ENCODE measurements at regions of chr5 and their contacts with region 1.

Region 1: GRCh38 chr5:150217873-150218692 is 28.2 kb downstream of the SLC6A7 start:
- DNase-seq: peak; percentile 91
- ATAC-seq: peak; percentile 96
- H3K4me3 Mint-ChIP-seq: no peak overlapping the region
- H3K27ac Mint-ChIP-seq: no peak overlapping the region
- H3K4me1 Mint-ChIP-seq: peaks cover 10% of the 10 kb centered on the region
- H3K27me3 Mint-ChIP-seq: peaks cover 25% of the 10 kb centered on the region

Region 2: DNA sequence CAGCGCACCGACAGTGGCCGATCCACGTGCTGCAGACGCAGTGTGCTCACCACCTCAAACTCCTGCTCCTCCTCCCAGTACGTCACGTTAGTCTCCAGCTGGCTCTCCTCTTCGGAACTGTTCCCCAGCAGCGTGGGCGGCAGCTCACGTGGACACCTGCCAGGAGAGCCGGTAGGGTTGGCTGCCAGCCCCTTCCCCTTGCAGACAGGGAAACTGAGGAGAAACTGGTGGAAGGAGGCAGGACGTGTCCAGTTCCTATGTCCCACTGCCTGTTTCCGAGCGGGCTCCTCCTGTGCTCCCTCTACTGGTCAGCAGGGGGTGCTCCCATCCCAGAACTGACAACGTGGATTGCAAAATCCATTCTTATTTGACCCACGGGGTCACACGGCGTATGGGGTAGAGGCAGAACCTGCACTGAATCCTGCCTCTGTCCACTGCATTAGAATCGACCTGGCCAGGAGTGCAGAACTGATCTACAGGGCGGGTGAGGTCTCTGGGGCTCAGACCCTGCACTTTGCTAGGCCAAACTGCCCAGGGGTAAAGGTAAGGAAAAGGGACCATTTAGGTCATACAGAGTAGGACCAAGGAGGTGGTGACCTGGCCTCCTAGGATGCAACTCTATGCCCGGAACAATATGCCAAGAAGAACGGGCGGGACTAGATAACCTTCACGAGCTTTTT is 88.1 kb before region 1 on chr5:
- CTCF ChIA-PET with region 1: interaction called, 16 read pairs
- POLR2A ChIA-PET with region 1: no interaction called
- DNase-seq: peak; percentile 72
- ATAC-seq: peak; percentile 66
- H3K4me3 Mint-ChIP-seq: no peak overlapping the region
- H3K27ac Mint-ChIP-seq: no peak overlapping the region
- H3K4me1 Mint-ChIP-seq: peaks cover 15% of the 10 kb centered on the region
- H3K27me3 Mint-ChIP-seq: no peaks in the 10 kb centered on the region